ENCODE measurements at regions of chr5 and their contacts with region 1.

Region 1: DNA sequence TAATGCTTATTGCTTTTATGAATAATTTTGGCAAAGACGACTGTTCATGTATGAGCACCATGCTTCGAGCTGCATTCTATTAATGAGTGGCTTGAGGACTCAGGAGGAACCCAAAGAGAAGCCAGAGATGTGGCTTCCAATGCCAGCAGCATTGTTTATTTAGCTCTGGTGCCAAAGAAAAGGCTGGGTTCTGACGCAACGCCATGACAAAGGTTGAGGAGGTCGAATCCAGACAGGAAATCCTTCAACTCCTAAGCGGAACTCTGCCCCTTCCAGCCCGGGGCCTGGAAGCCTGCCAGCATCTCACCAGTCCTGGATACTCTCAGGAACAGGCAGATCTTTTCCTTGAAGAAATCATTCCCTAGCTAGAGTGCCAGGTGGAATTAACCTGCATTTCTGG is 104.4 kb downstream of the ARHGAP26 start:
- DNase-seq: peak; percentile 94

Region 2: GRCh38 chr5:142716963-142717362 is 157.6 kb before region 1 on chr5:
- intact Hi-C with region 1: loop called in 1 of 2 experiments (anchors 5 kb)
- DNase-seq: peak; percentile 78

Region 3: GRCh38 chr5:142758056-142758795 is 116.3 kb before region 1 on chr5:
- intact Hi-C with region 1: no loop called
- DNase-seq: no peak

Region 4: GRCh38 chr5:142769741-142770631 is 104.6 kb before region 1 on chr5 and contains the start of gene ARHGAP26:
- intact Hi-C with region 1: loop called in 1 of 2 experiments (anchors 5 kb)
- DNase-seq: peak; percentile 99
- total RNA-seq, gene ARHGAP26: 31.8 to 39.5 TPM

Region 5: DNA sequence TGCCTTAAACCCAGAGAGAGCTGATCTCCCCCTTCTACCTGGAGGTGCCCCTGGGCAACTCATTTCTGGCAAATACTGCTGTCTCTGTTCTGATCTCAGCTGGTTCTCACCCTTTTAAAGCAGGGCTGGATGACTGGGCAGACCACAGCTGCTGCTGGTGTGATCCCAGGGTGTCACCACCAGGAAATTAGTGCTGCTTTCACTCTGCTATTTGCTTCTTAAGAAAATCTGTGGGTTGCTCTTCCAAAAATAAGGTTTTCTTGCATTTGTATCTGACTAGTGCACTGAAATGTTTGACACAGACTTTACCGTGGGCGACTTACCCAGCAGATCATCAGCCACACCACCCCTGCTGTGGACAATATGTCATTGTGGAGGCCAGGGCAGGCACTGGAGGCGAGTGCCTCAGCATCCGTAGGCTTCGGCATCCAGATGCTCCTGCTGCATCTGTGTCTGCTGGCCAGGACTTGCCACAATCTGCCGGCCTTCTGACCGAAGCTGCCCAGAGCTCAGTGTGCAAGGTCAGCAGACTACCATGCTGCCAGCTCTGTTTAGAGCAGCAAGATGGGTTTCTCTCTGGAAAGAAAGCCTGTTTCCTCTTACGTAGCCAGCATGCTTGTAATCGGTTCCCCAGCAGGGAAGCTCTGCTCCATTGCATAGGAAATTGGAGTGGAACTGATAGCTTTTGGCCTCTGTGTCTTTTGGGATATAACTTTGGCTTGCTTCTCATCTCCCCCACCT is 90.8 kb before region 1 on chr5:
- intact Hi-C with region 1: loop called in 1 of 2 experiments (anchors 5 kb)
- DNase-seq: peak; percentile 82

Region 6: DNA sequence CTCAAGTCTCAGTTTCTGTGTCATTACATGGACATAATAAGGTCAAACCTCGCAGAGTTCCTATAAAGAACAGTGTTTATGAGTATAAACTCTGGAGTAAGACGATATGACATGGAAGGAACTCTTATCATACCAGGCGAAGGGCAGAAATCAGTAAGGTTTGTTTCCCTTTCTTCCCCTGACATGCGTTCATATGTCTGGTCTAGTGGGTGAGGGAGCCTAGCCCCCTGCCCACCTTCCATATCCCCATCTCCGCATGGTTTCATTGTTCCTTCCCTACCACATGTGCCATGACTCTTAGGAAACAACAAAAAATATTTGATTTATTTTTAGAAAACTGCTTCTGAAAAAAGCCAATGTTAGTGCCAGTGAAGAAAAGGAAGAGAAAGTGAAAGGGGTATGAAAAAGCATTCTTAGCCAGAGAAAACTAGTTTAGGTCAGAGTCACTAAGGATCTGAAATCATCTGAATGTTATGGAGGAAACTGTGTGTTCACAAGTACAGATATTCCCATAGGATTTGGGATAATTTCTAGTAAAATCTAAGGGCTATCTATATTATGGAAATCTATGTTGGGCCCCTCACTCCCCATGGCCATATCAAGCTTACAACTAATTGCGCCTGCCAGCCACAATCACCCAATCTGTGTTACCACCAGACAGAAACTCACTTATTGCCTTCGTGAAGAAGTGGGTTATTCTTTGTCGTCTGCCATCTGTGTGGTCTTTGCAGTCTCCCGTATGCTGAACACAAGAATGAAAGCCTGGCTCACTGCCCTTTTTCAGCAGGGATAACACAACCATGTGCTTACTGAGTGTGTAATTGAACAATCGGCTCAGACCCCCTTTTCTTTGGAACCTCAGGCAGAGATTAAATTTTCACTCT is 917.6 kb after region 1 on chr5:
- intact Hi-C with region 1: no loop called
- DNase-seq: no peak